ENCODE measurements at regions of chr4 and their contacts with region 1.

Region 1: DNA sequence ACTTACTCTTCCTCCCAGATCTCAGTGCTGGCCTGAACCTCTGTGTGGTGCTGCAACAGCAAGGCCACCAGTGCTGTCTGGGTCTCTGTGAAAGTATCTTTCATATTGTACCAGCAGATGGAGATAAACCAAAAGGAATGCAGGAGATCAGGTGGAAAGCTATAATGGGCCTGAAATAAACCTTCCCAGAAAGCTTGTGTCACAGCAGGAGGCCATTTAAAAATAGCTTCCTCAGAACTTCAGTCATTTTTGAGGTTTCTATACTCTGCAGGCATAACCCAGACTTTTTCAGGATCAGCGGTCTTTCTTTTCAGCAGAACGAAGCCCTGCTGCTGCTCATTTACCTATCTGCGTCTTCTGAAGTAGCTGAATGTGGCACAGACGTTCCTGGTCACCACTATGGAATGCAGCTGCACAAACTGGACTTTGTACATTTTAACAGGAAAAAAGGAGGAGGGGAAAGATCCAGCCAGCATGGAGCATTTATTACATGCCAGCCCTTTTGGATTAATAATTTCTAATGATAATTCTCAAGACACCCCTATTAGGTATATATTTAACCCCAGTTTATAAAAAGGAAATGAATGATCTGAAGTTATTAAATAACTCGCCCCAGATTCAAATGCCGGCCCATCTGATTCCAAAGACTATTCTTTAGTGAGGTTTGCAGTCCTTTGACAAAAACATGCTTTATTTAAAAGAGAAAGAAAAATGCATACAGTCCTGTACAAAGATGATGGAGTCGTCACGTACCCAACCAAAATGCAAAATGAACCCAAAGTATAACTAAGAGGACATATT is 119.7 kb downstream of the NFKB1 start:
- DNase-seq: peak; percentile 90

Region 2: GRCh38 chr4:103008875-103009729 is 388.2 kb after region 1 on chr4:
- in situ Hi-C with region 1: loop called (anchors 10 kb)
- DNase-seq: peak; percentile 76

Region 3: DNA sequence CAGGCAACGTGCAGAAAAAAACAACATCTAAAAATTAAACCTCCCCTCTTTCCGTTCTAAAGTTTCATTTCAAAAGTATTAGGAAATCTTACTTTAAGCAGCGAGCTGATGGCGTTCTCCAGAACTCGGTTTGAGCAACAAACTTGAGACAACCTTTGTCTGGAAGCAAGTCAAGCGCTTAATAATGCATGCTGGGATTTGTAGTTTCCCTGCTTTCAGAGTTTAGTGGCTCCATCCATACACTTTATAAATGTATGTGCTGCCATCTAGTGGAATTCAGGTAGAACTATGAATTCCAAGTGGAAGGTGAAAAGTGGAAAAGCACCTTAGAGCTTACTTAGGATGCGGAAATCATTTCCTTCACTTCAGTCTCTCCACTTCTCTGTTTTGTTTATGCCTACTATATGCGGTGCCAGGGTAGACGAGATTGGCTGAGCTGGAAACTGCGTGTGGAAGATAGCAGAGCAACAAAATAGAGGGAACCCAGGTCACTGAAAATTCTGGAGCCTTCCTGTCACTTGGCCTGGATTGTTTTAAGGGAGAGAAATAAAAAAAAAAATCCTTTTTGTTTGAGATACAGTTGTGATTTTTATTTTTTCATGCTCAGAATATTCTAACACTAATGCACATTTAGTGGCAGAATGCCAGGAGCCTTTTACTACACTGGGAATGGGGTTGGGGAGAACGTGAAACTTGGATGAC is 478.9 kb after region 1 on chr4 and contains the start of gene BDH2:
- in situ Hi-C with region 1: loop called (anchors 25 kb)
- DNase-seq: peak; percentile 87

Measured in KBM-7 (cell line).